Ovary (tissue), 10 donors: ENCODE measurements at regions of chr17 and their contacts with region 1.

Region 1: GRCh38 chr17:979538-980405 is at the start of gene NXN:
- DNase-seq: peak; percentile 84 to 94 (median 93)
- H3K4me3 ChIP-seq: peak within 1 kb of the TSS; percentile 79
- H3K27ac ChIP-seq: peak within 1 kb of the TSS; percentile 52 to 54
- H3K4me1 ChIP-seq: peaks cover 1% of the 10 kb centered on the region
- H3K27me3 ChIP-seq: no peaks in the 10 kb centered on the region
- CTCF ChIP-seq: peak in 2 of 3 donors; percentile 48 to 50
- EP300 ChIP-seq: no peak
- POLR2A ChIP-seq: no peak
- total RNA-seq, gene NXN: 5.5 to 34.8 (median 28.4) TPM

Region 2: GRCh38 chr17:781805-782731 is 197.7 kb before region 1 on chr17 and contains the starts of genes GLOD4 and MRM3:
- intact Hi-C with region 1: loop called in 1 of 4 experiments (anchors 5 kb)
- DNase-seq: peak; percentile 88 to 97 (median 94)
- H3K4me3 ChIP-seq: peak within 1 kb of the TSS; percentile 78
- H3K27ac ChIP-seq: peak within 1 kb of the TSS; percentile 46 to 64
- H3K4me1 ChIP-seq: peaks cover 2% of the 10 kb centered on the region
- H3K27me3 ChIP-seq: no peaks in the 10 kb centered on the region
- CTCF ChIP-seq: peak in 2 of 3 donors; percentile 49 to 68
- EP300 ChIP-seq: no peak
- POLR2A ChIP-seq: peak; percentile 82
- total RNA-seq, gene GLOD4: 22.1 to 66.7 (median 46.0) TPM
- total RNA-seq, gene MRM3: 10.1 to 16.7 (median 14.0) TPM

Region 3: GRCh38 chr17:794876-795275 is 184.9 kb before region 1 on chr17:
- intact Hi-C with region 1: loop called (anchors 2 to 5 kb)
- DNase-seq: peak; percentile 65 to 84 (median 79)
- H3K4me3 ChIP-seq: no peak overlapping the region
- H3K27ac ChIP-seq: no peak overlapping the region
- H3K4me1 ChIP-seq: no peaks in the 10 kb centered on the region
- H3K27me3 ChIP-seq: no peaks in the 10 kb centered on the region
- CTCF ChIP-seq: peak; percentile 40 to 84 (median 71)
- EP300 ChIP-seq: no peak
- POLR2A ChIP-seq: no peak

Region 4: DNA sequence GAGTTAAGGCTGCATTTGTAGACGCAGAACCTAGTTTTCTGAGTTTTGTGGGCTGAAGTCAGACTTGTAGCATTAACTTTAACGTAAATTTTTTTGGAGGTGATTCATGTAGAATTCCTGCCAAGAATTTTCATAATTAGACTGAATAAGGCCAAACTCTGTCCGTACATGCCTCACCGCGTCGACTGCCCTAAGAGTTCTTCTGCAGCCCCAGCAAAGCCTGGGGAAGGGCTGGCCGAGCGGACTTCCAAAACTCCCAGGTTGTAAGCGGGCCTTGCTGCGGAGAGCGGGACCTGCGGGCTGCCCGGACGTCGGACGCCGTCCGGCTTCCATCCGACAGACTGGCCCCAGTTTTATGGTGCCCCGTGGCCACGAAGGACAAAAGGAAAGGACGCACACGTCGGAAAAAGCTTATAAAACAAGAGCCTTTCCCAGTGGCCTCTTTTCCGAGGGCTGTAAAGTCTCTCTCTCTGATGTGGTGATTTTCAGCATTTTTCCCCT is 75.7 kb before region 1 on chr17:
- intact Hi-C with region 1: loop called in 1 of 4 experiments (anchors 5 kb)
- DNase-seq: peak; percentile 48 to 67 (median 55)
- H3K4me3 ChIP-seq: no peak overlapping the region
- H3K27ac ChIP-seq: peak overlapping the region in 1 of 2 donors; percentile 36
- H3K4me1 ChIP-seq: peaks cover 11% of the 10 kb centered on the region
- H3K27me3 ChIP-seq: no peaks in the 10 kb centered on the region
- CTCF ChIP-seq: no peak
- EP300 ChIP-seq: no peak
- POLR2A ChIP-seq: no peak

Region 5: GRCh38 chr17:1143573-1143972 is 163.8 kb after region 1 on chr17:
- intact Hi-C with region 1: no loop called
- DNase-seq: no peak
- H3K4me3 ChIP-seq: no peak overlapping the region
- H3K27ac ChIP-seq: no peak overlapping the region
- H3K4me1 ChIP-seq: peaks cover 6% of the 10 kb centered on the region
- H3K27me3 ChIP-seq: no peaks in the 10 kb centered on the region
- CTCF ChIP-seq: no peak
- EP300 ChIP-seq: no peak
- POLR2A ChIP-seq: no peak